Breast epithelium (tissue), 4 donors: ENCODE measurements at regions of chr10 and their contacts with region 1.

Region 1: DNA sequence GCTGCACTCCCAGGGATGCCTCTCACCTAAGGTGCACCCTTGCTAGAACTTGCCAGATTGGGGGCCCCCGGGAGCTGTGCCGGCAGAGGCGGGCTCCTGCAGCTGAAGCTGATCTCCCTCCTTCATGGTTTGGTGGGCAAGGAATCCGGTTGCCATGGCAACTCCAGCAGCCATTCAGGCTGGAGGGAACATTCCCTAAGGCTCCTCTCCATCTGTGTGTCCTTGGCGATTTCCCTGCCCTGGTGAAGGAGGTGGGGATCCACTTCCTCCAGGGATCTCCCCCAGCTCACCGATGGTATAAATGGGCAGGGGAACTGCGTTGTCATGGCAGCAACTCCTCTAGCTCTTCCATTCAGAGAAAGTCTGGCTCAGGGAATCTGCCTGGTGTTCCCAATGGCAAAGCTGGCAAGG is 49.6 kb upstream of the GPR158 start:
- DNase-seq: no peak
- H3K4me3 ChIP-seq: no peak overlapping the region
- H3K27ac ChIP-seq: no peak overlapping the region
- H3K4me1 ChIP-seq: no peaks in the 10 kb centered on the region
- H3K27me3 ChIP-seq: no peaks in the 10 kb centered on the region
- CTCF ChIP-seq: no peak
- POLR2A ChIP-seq: no peak

Region 2: DNA sequence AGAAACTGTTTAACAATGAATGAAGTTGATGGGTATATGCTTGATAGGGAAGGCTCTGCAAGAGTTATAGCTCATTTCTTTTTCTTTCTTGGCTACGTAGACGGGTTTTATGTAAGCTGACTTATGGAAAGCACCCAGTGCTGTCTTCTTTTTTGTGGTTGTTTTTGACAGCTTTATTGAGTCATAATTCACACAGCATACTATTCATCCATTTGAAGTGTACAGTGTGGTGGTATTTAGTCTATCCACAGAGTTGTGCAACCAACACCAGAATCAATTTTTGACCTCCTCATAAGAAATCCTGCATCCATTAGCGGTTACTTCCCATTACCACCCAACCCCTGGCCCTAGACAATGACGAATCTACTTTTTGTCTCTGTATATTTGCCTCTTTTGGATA is 1156.9 kb before region 1 on chr10:
- intact Hi-C with region 1: no loop called
- DNase-seq: no peak
- H3K4me3 ChIP-seq: no peak overlapping the region
- H3K27ac ChIP-seq: no peak overlapping the region
- H3K4me1 ChIP-seq: no peaks in the 10 kb centered on the region
- H3K27me3 ChIP-seq: no peaks in the 10 kb centered on the region
- CTCF ChIP-seq: no peak
- POLR2A ChIP-seq: no peak

Region 3: DNA sequence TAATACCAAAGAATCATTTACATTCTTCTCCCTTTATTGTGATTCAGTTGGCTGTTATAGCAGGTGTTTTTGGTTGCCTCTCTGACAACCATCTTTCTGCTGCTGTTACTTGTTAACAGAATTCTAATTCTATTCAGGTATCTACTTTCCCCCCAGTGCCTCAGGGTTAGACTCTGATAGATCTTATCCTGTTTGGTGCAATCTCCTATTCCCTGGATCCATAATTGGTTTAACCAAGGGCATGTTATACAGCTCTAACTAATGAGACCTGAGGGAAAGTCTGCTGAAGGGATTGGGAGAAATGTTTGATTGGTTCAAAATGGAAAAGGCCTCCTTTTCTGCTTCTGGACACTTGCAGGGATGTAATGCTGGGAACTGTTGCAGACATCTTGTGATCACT is 211.1 kb after region 1 on chr10:
- intact Hi-C with region 1: loop called (anchors 5 kb)
- DNase-seq: no peak
- H3K4me3 ChIP-seq: no peak overlapping the region
- H3K27ac ChIP-seq: no peak overlapping the region
- H3K4me1 ChIP-seq: no peaks in the 10 kb centered on the region
- H3K27me3 ChIP-seq: no peaks in the 10 kb centered on the region
- CTCF ChIP-seq: no peak
- POLR2A ChIP-seq: no peak